Astrocyte of the cerebellum (primary cell): ENCODE measurements at regions of chr1 and their contacts with region 1.

Region 1: DNA sequence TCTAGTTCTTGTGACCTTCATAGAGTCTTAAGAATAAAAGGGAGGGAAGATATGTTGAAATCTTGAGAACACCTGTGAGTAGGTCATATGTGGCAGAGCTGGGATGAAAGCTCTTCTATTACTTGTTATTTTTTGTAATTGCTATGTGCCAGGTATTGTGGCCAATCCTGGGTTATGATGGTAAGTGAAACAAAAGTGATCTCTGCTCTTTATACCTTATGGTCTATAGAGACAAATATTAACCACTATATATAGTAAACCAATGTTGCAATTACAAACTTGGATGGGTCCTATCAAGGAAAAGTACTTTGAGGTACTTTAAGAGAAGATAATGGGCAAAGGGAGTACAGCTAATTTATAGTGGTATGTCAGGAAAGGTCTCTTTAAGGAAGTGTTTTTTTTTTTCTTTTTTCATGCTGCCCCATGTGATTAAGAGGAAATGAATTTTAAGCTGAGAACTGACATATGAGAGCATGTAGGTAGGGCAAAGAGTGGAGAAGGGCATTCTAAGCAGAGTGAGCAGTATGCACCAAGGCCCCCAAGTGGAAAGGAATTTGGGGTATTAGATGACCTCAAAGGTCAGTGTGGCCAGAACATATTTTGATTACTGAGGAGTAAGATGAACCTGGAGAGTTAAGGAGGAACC is 43.3 kb downstream of the POU2F1 start:
- DNase-seq: no peak
- H3K4me3 ChIP-seq: no peak overlapping the region
- CTCF ChIP-seq: no peak

Region 2: GRCh38 chr1:167305706-167306277 is 41.9 kb after region 1 on chr1:
- in situ Hi-C with region 1: loop called (anchors 5 kb)
- DNase-seq: no peak
- H3K4me3 ChIP-seq: no peak overlapping the region
- CTCF ChIP-seq: no peak

Region 3: DNA sequence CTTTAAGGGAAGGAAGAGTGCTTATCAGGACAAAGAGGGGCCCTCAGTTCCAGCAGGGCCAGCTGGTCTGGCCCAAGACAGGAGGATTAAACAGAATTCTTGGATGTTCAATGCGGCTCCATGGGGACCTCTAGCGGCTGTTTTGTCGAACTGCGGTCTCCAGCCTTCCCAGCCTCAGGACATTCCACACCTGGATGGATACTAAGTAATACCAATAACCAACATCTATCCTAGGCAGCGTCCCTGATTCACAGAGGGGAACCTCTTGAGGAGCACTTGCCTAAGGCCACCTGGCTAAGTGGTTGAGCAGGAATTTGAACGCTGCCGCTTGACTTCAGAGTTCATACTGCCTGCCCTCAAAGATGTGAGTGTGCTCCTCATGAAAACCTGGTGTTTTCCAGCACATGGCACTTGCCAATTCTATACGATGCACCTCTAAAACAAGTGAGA is 269.9 kb after region 1 on chr1:
- in situ Hi-C with region 1: loop called (anchors 10 kb)
- DNase-seq: peak; percentile 53
- H3K4me3 ChIP-seq: no peak overlapping the region
- CTCF ChIP-seq: peak; percentile 93